ENCODE measurements at regions of chr18 and their contacts with region 1.

Region 1: GRCh38 chr18:74652392-74652988 is 54.8 kb downstream of the ZNF407 start:
- DNase-seq: peak; percentile 69
- ATAC-seq: peak; percentile 59
- H3K4me3 ChIP-seq: no peak overlapping the region
- H3K27ac ChIP-seq: no peak overlapping the region
- H3K4me1 ChIP-seq: no peaks in the 10 kb centered on the region
- H3K27me3 ChIP-seq: no peaks in the 10 kb centered on the region
- CTCF ChIP-seq: peak; percentile 71

Region 2: GRCh38 chr18:74613381-74613780 is 39.1 kb before region 1 on chr18:
- CTCF ChIA-PET with region 1: no interaction called
- POLR2A ChIA-PET with region 1: no interaction called
- intact Hi-C with region 1: no loop called
- DNase-seq: no peak
- ATAC-seq: no peak
- H3K4me3 ChIP-seq: no peak overlapping the region
- H3K27ac ChIP-seq: no peak overlapping the region
- H3K4me1 ChIP-seq: peaks cover 26% of the 10 kb centered on the region
- H3K27me3 ChIP-seq: no peaks in the 10 kb centered on the region
- CTCF ChIP-seq: no peak

Region 3: GRCh38 chr18:74806700-74807416 is 154.4 kb after region 1 on chr18:
- CTCF ChIA-PET with region 1: no interaction called
- POLR2A ChIA-PET with region 1: no interaction called
- intact Hi-C with region 1: loop called (anchors 2 kb)
- DNase-seq: peak; percentile 97
- ATAC-seq: peak; percentile 99
- H3K4me3 ChIP-seq: peak overlapping the region; percentile 36
- H3K27ac ChIP-seq: peak overlapping the region; percentile 92
- H3K4me1 ChIP-seq: peaks cover 26% of the 10 kb centered on the region
- H3K27me3 ChIP-seq: no peaks in the 10 kb centered on the region
- CTCF ChIP-seq: no peak

Region 4: DNA sequence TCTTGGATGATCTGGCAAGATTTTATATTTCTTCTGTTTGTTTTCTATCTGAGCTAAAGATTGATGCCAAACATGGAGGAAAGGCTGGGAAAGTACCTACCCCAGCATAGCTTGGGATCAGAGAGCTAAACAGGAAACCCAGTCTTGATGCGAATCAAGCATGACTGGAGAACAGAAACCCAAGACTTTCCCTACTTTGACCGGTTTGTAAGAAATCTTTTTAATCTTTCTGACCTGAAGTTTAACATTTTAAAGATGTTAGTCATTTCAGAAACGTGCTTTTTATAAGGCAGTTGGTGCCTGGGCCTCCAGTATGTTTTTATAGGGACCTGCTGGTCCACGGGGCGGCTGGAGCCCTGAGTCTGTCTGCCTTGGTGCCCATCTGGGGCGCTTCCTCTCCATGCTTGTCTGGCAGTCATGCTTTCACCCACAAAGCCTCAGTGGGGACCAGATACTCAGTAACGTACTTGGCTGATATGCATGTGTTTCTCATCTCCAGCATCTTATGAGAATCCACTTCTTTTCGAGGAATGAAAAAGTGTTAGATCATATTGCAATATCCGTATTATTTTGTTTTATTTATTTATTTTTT is 289.9 kb after region 1 on chr18:
- CTCF ChIA-PET with region 1: no interaction called
- POLR2A ChIA-PET with region 1: no interaction called
- intact Hi-C with region 1: loop called (anchors 5 kb)
- DNase-seq: peak; percentile 50
- ATAC-seq: peak; percentile 48
- H3K4me3 ChIP-seq: no peak overlapping the region
- H3K27ac ChIP-seq: peak overlapping the region; percentile 33
- H3K4me1 ChIP-seq: peaks cover 44% of the 10 kb centered on the region
- H3K27me3 ChIP-seq: no peaks in the 10 kb centered on the region
- CTCF ChIP-seq: no peak

Region 5: DNA sequence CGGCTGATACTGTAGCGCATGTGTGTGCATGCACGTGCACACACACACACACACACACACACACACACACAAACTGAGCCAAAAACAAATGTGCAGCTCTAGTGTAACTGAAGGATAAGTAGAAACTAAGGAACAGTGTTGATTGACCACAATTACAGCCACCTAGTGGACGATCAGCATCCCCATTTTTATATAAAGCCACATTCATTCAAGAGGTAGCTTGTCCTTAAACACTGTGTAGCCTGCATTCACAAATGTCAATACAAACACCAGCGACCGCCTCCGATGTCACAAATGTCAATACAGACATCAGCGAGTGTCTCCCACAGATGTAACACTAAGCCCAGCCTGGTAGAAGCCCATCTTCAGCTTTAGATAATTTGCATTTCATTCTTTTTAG is 389.1 kb after region 1 on chr18:
- CTCF ChIA-PET with region 1: interaction called, 5 read pairs
- POLR2A ChIA-PET with region 1: no interaction called
- intact Hi-C with region 1: loop called (anchors 2 kb)
- DNase-seq: peak; percentile 50
- ATAC-seq: peak; percentile 87
- H3K4me3 ChIP-seq: no peak overlapping the region
- H3K27ac ChIP-seq: no peak overlapping the region
- H3K4me1 ChIP-seq: peaks cover 11% of the 10 kb centered on the region
- H3K27me3 ChIP-seq: no peaks in the 10 kb centered on the region
- CTCF ChIP-seq: peak; percentile 78

Region 6: GRCh38 chr18:75478996-75479880 is 826.7 kb after region 1 on chr18:
- CTCF ChIA-PET with region 1: no interaction called
- POLR2A ChIA-PET with region 1: no interaction called
- intact Hi-C with region 1: loop called (anchors 1 kb)
- DNase-seq: peak; percentile 73
- ATAC-seq: peak; percentile 87
- H3K4me3 ChIP-seq: no peak overlapping the region
- H3K27ac ChIP-seq: no peak overlapping the region
- H3K4me1 ChIP-seq: peaks cover 11% of the 10 kb centered on the region
- H3K27me3 ChIP-seq: no peaks in the 10 kb centered on the region
- CTCF ChIP-seq: peak; percentile 89

Measured in PC-3 (cell line).